ENCODE measurements at regions of chr18 and their contacts with region 1.

Region 1: GRCh38 chr18:25351777-25352628 is at the start of gene ZNF521:
- DNase-seq: no peak
- H3K4me3 ChIP-seq: peak within 1 kb of the TSS; percentile 69 to 76 (median 74)
- H3K27ac ChIP-seq: peak within 1 kb of the TSS; percentile 84 to 87 (median 84)
- H3K4me1 ChIP-seq: peaks cover 0 to 28% (median 25%) of the 10 kb centered on the region in 4 donors
- H3K27me3 ChIP-seq: peaks cover 5 to 38% (median 16%) of the 10 kb centered on the region in 4 donors
- CTCF ChIP-seq: no peak
- EP300 ChIP-seq: no peak
- POLR2A ChIP-seq: no peak
- total RNA-seq, gene ZNF521: 15.6 to 20.6 (median 16.9) TPM

Region 2: GRCh38 chr18:24837066-24837465 is 514.9 kb before region 1 on chr18:
- intact Hi-C with region 1: no loop called
- DNase-seq: no peak
- H3K4me3 ChIP-seq: no peak overlapping the region
- H3K27ac ChIP-seq: no peak overlapping the region
- H3K4me1 ChIP-seq: no peaks in the 10 kb centered on the region
- H3K27me3 ChIP-seq: peaks cover 0 to 8% (median 0%) of the 10 kb centered on the region in 4 donors
- CTCF ChIP-seq: no peak
- EP300 ChIP-seq: no peak
- POLR2A ChIP-seq: no peak

Region 3: GRCh38 chr18:24878289-24878688 is 473.7 kb before region 1 on chr18:
- intact Hi-C with region 1: loop called (anchors 10 kb)
- DNase-seq: no peak
- H3K4me3 ChIP-seq: no peak overlapping the region
- H3K27ac ChIP-seq: no peak overlapping the region
- H3K4me1 ChIP-seq: no peaks in the 10 kb centered on the region
- H3K27me3 ChIP-seq: peaks cover 0 to 15% (median 0%) of the 10 kb centered on the region in 4 donors
- CTCF ChIP-seq: peak; percentile 26 to 36 (median 28)
- EP300 ChIP-seq: no peak
- POLR2A ChIP-seq: no peak

Region 4: DNA sequence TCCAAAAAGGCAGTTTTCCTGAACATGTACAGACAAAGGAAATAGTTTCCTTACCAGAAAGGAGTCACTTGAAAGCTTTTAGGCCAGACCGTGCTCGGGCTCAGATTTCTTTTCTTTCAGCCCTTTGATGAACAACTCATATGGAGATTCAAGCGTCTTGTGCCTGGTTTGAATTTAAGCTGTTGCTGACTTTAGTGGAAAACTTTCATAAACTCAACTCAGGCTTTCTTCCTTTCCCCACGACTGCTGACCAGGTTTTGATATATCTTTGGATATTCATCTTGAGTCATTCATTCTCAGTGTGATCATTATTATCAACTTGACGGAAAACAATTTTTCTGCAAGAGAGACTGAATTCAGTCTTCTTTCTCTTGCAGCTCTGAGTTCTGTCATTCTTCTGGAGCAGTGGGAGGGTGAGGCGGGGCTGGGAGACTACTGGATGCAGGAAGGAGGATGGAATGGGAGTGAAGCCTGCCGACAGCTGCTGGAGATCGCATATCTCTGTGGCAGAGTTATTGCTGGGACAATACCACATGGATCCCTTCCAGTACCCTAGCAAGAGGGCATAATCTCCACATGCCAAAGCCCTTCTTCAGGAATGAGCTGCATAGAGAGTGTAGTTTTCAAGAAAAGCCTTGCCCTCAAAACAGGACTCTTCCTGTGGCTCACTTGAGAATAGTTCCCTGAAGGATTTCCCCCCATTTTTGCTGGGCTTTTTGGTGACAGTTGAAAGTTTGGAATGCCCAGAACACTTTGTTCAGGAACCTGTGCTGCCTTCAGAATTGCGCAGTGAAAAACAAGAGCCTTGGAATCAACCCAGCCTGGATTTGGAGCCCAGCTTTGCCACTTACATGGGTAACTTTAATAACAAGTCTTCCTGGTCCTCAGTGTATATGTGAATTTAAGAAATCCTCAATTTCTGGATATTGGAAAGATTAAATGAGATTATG is 364.4 kb before region 1 on chr18:
- intact Hi-C with region 1: no loop called
- DNase-seq: no peak
- H3K4me3 ChIP-seq: no peak overlapping the region
- H3K27ac ChIP-seq: peak overlapping the region in 3 of 4 donors; percentile 22 to 41 (median 32)
- H3K4me1 ChIP-seq: no peaks in the 10 kb centered on the region
- H3K27me3 ChIP-seq: peaks cover 0 to 14% (median 0%) of the 10 kb centered on the region in 4 donors
- CTCF ChIP-seq: no peak
- EP300 ChIP-seq: no peak
- POLR2A ChIP-seq: no peak

Region 5: GRCh38 chr18:25058521-25058920 is 293.5 kb before region 1 on chr18:
- intact Hi-C with region 1: no loop called
- DNase-seq: no peak
- H3K4me3 ChIP-seq: no peak overlapping the region
- H3K27ac ChIP-seq: no peak overlapping the region
- H3K4me1 ChIP-seq: no peaks in the 10 kb centered on the region
- H3K27me3 ChIP-seq: peaks cover 0 to 26% (median 0%) of the 10 kb centered on the region in 4 donors
- CTCF ChIP-seq: no peak
- EP300 ChIP-seq: no peak
- POLR2A ChIP-seq: no peak

Region 6: GRCh38 chr18:25230658-25231326 is 121.2 kb before region 1 on chr18:
- intact Hi-C with region 1: loop called (anchors 10 kb)
- DNase-seq: peak; percentile 94
- H3K4me3 ChIP-seq: peak overlapping the region in 2 of 4 donors; percentile 1 to 15
- H3K27ac ChIP-seq: peak overlapping the region; percentile 50 to 72 (median 58)
- H3K4me1 ChIP-seq: peaks cover 16 to 42% (median 33%) of the 10 kb centered on the region in 4 donors
- H3K27me3 ChIP-seq: no peaks in the 10 kb centered on the region
- CTCF ChIP-seq: no peak
- EP300 ChIP-seq: no peak
- POLR2A ChIP-seq: no peak

Region 7: GRCh38 chr18:25289001-25289631 is 62.9 kb before region 1 on chr18:
- intact Hi-C with region 1: loop called (anchors 10 kb)
- DNase-seq: no peak
- H3K4me3 ChIP-seq: no peak overlapping the region
- H3K27ac ChIP-seq: peak overlapping the region in 2 of 4 donors; percentile 28 to 41
- H3K4me1 ChIP-seq: peaks cover 16 to 36% (median 32%) of the 10 kb centered on the region in 4 donors
- H3K27me3 ChIP-seq: no peaks in the 10 kb centered on the region
- CTCF ChIP-seq: no peak
- EP300 ChIP-seq: no peak
- POLR2A ChIP-seq: no peak

Region 8: DNA sequence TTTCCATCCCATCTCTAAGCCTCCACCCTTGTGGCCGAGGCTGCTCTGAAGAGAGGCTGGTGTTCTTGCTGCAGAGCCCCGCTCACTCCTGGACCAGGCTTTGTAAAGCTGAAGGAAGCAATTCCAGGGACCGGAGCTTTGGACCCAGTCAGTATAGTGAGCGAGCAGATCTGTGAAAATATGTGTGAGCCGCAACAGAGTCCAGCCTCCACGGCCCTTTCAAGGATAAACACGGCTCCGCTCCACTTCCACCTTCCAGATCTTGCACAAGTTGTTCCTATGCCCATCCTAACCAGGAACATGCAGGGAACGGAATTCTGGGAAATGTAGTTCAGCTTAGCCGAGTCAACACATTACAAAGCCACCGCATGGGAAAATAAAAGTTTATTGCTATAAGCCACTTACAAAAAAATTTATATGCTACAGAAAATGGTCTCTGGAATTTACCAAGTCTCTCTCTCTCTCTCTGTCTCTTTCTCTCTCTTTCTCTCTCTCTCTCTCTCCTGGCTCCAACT is 151.6 kb after region 1 on chr18:
- intact Hi-C with region 1: loop called (anchors 5 kb)
- DNase-seq: no peak
- H3K4me3 ChIP-seq: peak overlapping the region; percentile 43 to 57 (median 49)
- H3K27ac ChIP-seq: peak overlapping the region in 2 of 4 donors; percentile 22 to 41
- H3K4me1 ChIP-seq: peaks cover 5 to 11% (median 9%) of the 10 kb centered on the region in 4 donors
- H3K27me3 ChIP-seq: no peaks in the 10 kb centered on the region
- CTCF ChIP-seq: peak in 1 of 3 experiments; percentile 4
- EP300 ChIP-seq: no peak
- POLR2A ChIP-seq: no peak

Region 9: DNA sequence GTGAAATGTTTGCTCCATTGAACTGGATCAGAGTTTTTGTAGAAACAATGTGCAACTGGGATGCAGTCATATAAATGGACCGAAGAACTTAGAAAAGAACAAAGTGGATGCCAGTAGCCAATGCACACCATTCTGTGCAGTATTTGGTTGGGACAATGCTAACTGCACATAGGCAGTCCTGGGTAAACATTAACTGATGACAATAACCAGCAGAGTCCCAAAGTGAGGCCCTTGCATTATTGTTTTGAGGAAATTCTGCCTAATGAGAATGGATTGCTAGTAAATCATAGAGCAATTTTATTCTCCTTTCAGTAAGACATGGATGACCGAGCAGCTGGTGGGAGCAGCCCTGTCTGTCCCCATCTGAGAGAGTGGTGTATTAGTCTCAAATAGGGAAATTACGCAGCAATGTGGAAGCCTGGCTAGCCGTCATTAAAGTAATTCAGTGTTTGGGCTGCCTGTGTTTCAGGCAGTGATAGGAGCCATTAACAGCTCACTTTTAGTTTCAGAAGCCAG is 1101.4 kb after region 1 on chr18:
- intact Hi-C with region 1: no loop called
- DNase-seq: peak; percentile 78
- H3K4me3 ChIP-seq: no peak overlapping the region
- H3K27ac ChIP-seq: no peak overlapping the region
- H3K4me1 ChIP-seq: peaks cover 0 to 7% (median 0%) of the 10 kb centered on the region in 4 donors
- H3K27me3 ChIP-seq: peaks cover 0 to 4% (median 0%) of the 10 kb centered on the region in 4 donors
- CTCF ChIP-seq: no peak
- EP300 ChIP-seq: no peak
- POLR2A ChIP-seq: no peak